Ascending aorta (tissue), 2 donors: ENCODE measurements at regions of chr5 and their contacts with region 1.

Region 1: DNA sequence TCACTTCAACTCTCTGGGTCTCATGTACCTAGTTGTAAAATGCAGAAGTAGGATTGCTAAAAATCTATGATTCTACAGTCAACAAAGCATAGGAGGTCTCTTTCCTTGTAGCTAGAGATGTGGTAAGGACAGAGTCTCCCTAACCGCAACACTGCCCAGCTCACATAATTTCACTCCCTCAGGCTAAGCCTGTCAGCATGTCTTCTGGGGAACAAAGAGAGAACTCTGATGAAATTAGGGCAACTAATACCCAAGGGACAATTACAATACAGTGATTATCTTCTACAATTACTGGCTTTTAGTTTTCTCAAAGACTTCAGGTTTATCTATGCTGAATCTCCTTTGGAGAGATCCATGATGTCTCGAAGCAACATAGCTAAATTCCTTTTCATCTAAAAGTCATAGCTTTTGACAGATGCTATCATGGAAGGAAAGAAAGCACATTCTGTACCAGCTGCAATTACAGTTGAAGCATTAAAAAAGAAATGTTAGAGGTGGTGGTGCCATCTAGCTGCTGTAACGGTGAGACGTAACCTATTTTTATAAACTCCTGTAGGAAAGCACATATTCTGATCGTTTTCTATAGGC is 141.1 kb upstream of the TARS1 start:
- DNase-seq: no peak
- H3K4me3 ChIP-seq: peak overlapping the region in 1 of 2 donors; percentile 22
- H3K27ac ChIP-seq: peak overlapping the region; percentile 66 to 79
- H3K4me1 ChIP-seq: no peaks in the 10 kb centered on the region
- H3K27me3 ChIP-seq: no peaks in the 10 kb centered on the region
- CTCF ChIP-seq: peak; percentile 12 to 66 (median 29)

Region 2: GRCh38 chr5:32837211-32837610 is 462.5 kb before region 1 on chr5:
- intact Hi-C with region 1: loop called (anchors 10 kb)
- DNase-seq: no peak
- H3K4me3 ChIP-seq: no peak overlapping the region
- H3K27ac ChIP-seq: peak overlapping the region in 1 of 2 donors; percentile 58
- H3K4me1 ChIP-seq: peaks cover 2 to 18% of the 10 kb centered on the region in 2 donors
- H3K27me3 ChIP-seq: no peaks in the 10 kb centered on the region
- CTCF ChIP-seq: no peak

Region 3: GRCh38 chr5:33338336-33339113 is 38.8 kb after region 1 on chr5:
- intact Hi-C with region 1: loop called (anchors 5 kb)
- DNase-seq: no peak
- H3K4me3 ChIP-seq: no peak overlapping the region
- H3K27ac ChIP-seq: peak overlapping the region; percentile 55 to 58
- H3K4me1 ChIP-seq: peaks cover 0 to 29% of the 10 kb centered on the region in 2 donors
- H3K27me3 ChIP-seq: no peaks in the 10 kb centered on the region
- CTCF ChIP-seq: no peak